Endothelial cell of umbilical vein (primary cell): ENCODE measurements at regions of chr19 and their contacts with region 1.

Region 1: GRCh38 chr19:38634757-38635482 is 12.5 kb upstream of the ACTN4 start:
- DNase-seq: peak; percentile 64
- H3K4me3 ChIP-seq: no peak overlapping the region
- H3K27ac ChIP-seq: no peak overlapping the region
- H3K4me1 ChIP-seq: no peaks in the 10 kb centered on the region
- H3K27me3 ChIP-seq: no peaks in the 10 kb centered on the region
- CTCF ChIP-seq: peak; percentile 90 to 93
- POLR2A ChIP-seq: no peak

Region 2: DNA sequence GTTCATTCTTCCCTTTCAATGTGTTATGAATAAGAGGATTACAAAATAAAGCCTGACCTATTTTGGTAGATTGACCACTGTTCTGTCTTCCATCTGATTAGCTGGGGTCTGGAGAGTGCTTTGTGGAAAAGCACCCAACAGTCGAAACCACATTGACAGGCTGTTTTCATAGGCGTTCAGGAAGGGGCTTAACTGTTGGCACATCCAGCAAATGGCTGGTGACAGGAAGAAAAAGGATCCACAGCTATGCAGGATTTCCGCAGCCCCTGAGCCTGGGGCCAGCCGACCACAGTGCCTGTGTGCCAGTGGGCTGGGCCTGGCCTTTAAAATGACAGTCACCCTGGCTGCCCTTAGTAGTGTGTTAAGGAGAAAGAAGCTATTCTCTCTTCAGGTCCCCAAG is 614.6 kb before region 1 on chr19:
- CTCF ChIA-PET with region 1: no interaction called
- POLR2A ChIA-PET with region 1: no interaction called
- dilution Hi-C with region 1: no loop called
- intact Hi-C with region 1: no loop called
- DNase-seq: peak; percentile 63
- H3K4me3 ChIP-seq: no peak overlapping the region
- H3K27ac ChIP-seq: peak overlapping the region; percentile 51
- H3K4me1 ChIP-seq: peaks cover 42% of the 10 kb centered on the region
- H3K27me3 ChIP-seq: no peaks in the 10 kb centered on the region
- CTCF ChIP-seq: no peak
- POLR2A ChIP-seq: no peak

Region 3: GRCh38 chr19:38229585-38230073 is 405.3 kb before region 1 on chr19:
- CTCF ChIA-PET with region 1: interaction called, 6 read pairs
- POLR2A ChIA-PET with region 1: no interaction called
- dilution Hi-C with region 1: no loop called
- intact Hi-C with region 1: loop called (anchors 10 kb)
- DNase-seq: peak; percentile 77
- H3K4me3 ChIP-seq: peak overlapping the region in 1 of 3 experiments; percentile 14
- H3K27ac ChIP-seq: no peak overlapping the region
- H3K4me1 ChIP-seq: peaks cover 8% of the 10 kb centered on the region
- H3K27me3 ChIP-seq: peaks cover 9 to 14% of the 10 kb centered on the region in 2 experiments
- CTCF ChIP-seq: peak in 1 of 2 donors; percentile 13
- POLR2A ChIP-seq: no peak

Region 4: DNA sequence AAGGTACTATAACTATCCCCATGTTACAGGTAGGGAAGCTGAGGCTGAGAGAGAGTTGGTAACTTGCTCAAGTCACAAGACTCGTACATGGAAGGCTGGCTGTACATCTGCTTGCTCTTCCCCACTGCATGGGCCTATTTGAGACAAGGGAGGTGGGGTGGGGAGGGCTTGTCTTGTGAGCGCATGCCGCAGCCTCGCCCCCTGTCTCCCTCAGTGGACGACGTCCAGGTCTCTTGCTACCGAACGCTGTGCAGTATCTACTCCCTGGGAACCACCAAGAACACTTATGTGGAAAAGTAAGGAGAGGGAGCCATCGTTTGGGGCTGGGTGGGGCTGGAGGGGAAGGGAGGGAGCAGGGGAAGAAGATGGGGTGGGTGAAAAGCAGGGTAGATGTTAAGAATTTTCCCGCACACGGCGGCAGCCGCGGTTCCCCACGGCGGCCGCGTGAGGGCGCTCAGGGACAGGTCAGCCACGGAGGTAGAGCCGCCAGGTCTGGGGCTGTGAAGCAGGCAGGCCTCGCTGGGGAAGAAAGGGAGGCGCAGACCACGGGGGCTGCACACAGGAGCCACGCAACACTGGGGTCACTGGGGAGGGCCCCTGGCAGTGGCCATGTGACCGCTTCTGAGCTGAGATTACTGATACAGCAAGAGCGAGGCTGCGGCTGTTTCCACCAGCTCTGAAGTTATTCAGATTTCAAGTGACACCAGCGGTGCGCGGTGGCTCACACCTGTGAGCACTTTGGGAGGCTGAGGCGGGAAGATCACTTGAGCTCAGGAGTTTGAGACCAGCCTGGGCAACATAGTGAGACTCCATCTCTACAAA is 119.9 kb before region 1 on chr19:
- CTCF ChIA-PET with region 1: interaction called, 43 read pairs
- POLR2A ChIA-PET with region 1: no interaction called
- dilution Hi-C with region 1: no loop called
- intact Hi-C with region 1: loop called (anchors 1 kb)
- DNase-seq: peak; percentile 52
- H3K4me3 ChIP-seq: no peak overlapping the region
- H3K27ac ChIP-seq: no peak overlapping the region
- H3K4me1 ChIP-seq: no peaks in the 10 kb centered on the region
- H3K27me3 ChIP-seq: no peaks in the 10 kb centered on the region
- CTCF ChIP-seq: peak; percentile 72 to 95
- POLR2A ChIP-seq: no peak

Region 5: GRCh38 chr19:38618590-38619360 is 16.1 kb before region 1 on chr19 and contains the start of gene EIF3K:
- CTCF ChIA-PET with region 1: interaction called, 23 read pairs
- POLR2A ChIA-PET with region 1: no interaction called
- dilution Hi-C with region 1: no loop called
- intact Hi-C with region 1: no loop called
- DNase-seq: peak; percentile 99
- H3K4me3 ChIP-seq: peak within 1 kb of the TSS; percentile 44 to 99 (median 73)
- H3K27ac ChIP-seq: peak within 1 kb of the TSS; percentile 65
- H3K4me1 ChIP-seq: peaks cover 14% of the 10 kb centered on the region
- H3K27me3 ChIP-seq: no peaks in the 10 kb centered on the region
- CTCF ChIP-seq: no peak
- POLR2A ChIP-seq: peak; percentile 94
- total RNA-seq, gene EIF3K: 267 and 277 TPM in 2 replicates

Region 6: DNA sequence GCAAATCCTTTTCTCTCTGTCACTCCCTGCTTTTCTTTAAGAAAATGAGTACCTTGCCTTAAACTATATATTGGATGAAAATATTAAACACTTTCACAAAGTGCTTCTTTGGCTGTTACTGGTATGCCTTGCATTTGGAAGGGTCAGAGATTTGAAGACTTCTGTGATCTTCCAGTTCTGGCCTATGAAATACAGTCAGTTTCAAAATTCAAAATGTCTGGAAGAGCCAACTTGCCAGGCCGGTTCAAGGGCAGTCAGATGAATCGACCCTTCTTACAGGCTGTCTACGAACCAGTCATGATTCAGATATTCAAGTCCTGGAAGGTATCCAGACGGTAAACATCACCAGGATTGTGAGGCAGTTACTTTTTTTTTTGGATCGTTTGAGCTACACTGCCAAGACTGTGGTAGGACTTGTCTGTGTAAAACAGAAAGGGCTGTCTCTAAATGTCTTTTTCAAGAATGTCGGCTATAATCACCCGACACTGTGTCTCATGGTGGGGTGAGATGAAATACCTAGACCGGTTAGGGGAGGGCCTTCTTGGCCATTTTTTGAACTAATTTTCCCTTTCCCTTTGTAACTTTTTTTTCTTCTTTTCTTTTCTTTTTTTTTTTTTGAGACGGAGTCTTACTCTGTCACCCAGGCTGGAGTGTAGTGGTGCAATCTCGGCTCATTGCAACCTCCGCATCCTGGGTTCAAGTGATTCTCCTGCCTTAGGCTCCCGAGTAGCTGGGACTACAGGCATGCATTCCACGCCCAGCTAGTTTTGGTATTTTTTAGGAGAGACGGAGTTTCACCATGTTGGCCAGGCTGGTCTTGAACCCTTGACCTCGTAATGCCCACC is 23.8 kb after region 1 on chr19:
- CTCF ChIA-PET with region 1: interaction called, 11 read pairs
- POLR2A ChIA-PET with region 1: no interaction called
- dilution Hi-C with region 1: no loop called
- intact Hi-C with region 1: no loop called
- DNase-seq: peak; percentile 98
- H3K4me3 ChIP-seq: no peak overlapping the region
- H3K27ac ChIP-seq: peak overlapping the region; percentile 87
- H3K4me1 ChIP-seq: peaks cover 66% of the 10 kb centered on the region
- H3K27me3 ChIP-seq: no peaks in the 10 kb centered on the region
- CTCF ChIP-seq: no peak
- POLR2A ChIP-seq: no peak

Region 7: GRCh38 chr19:38683393-38684080 is 48.6 kb after region 1 on chr19:
- CTCF ChIA-PET with region 1: interaction called, 13 read pairs
- POLR2A ChIA-PET with region 1: no interaction called
- dilution Hi-C with region 1: no loop called
- intact Hi-C with region 1: loop called (anchors 1 kb)
- DNase-seq: peak; percentile 89
- H3K4me3 ChIP-seq: no peak overlapping the region
- H3K27ac ChIP-seq: peak overlapping the region; percentile 90
- H3K4me1 ChIP-seq: peaks cover 66% of the 10 kb centered on the region
- H3K27me3 ChIP-seq: no peaks in the 10 kb centered on the region
- CTCF ChIP-seq: no peak
- POLR2A ChIP-seq: no peak

Region 8: GRCh38 chr19:38707512-38708114 is 72.7 kb after region 1 on chr19:
- CTCF ChIA-PET with region 1: interaction called, 9 read pairs
- POLR2A ChIA-PET with region 1: no interaction called
- dilution Hi-C with region 1: no loop called
- intact Hi-C with region 1: loop called (anchors 1 kb)
- DNase-seq: peak; percentile 91
- H3K4me3 ChIP-seq: no peak overlapping the region
- H3K27ac ChIP-seq: peak overlapping the region; percentile 47
- H3K4me1 ChIP-seq: peaks cover 30% of the 10 kb centered on the region
- H3K27me3 ChIP-seq: no peaks in the 10 kb centered on the region
- CTCF ChIP-seq: no peak
- POLR2A ChIP-seq: peak; percentile 70

Region 9: DNA sequence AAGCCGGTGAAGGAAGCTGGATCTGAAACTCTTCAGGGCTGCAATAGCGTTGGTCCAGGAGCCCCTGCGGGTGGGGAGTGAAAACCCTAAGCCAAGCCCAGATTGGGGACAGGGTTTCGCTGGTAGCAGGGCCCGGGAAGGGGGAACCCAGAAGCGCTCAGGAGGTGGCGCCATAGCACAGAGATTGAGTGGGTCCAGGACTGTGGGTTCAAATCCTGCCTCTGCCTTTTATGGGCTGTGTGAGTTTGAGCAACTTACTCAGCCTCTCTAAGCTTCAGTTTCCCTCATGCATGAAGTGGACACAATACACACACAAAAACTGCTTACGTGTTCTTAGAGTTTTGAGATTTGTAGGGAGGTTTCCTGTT is 577.4 kb after region 1 on chr19:
- CTCF ChIA-PET with region 1: no interaction called
- POLR2A ChIA-PET with region 1: no interaction called
- dilution Hi-C with region 1: no loop called
- intact Hi-C with region 1: no loop called
- DNase-seq: no peak
- H3K4me3 ChIP-seq: no peak overlapping the region
- H3K27ac ChIP-seq: no peak overlapping the region
- H3K4me1 ChIP-seq: no peaks in the 10 kb centered on the region
- H3K27me3 ChIP-seq: peaks cover 0 to 2% of the 10 kb centered on the region in 2 experiments
- CTCF ChIP-seq: peak in 1 of 2 donors; percentile 18
- POLR2A ChIP-seq: no peak